PC-9 (cell line): ENCODE measurements at regions of chr17 and their contacts with region 1.

Region 1: DNA sequence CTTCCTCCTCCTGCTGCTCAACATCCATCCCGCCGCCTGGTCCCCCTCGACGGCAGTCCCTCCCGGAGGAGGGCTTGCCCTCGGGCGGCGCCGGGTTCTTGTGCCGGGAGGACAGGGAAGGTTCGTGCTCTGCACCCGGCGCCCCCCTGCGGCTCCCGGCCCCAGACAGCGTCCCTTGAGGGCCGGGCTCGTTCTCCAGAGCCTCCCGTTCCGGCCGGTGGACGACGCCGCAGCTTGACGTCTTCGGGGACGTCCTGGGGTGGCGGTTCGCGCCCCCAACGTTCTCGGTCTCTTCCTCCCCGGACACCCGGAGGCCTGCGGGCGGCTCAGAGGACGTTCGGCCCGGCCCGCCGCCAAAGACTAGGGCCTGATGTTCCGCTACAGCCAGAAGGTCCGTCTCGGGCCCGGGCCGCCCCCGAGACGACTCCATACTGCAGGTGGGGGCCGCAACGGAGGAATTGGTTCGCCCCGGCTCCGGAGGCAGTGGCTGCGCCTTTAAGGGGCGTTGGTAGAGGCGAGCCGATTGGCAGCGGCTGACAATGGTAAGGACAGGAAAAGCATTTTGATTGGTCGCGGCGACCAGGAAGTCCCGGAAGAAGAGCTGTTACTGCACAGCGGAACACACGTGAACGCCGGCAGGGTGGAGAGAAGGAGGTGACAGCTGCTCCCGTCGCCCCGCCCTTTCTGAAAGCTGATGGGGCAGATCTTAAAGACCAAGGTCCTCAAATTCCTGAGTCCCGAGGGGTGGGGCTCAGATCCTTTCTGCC is at the start of gene BORCS6:
- DNase-seq: peak; percentile 90 to 96
- H3K4me3 ChIP-seq: peak within 1 kb of the TSS; percentile 86
- H3K27ac ChIP-seq: no peak within 1 kb of the TSS
- H3K4me1 ChIP-seq: peaks cover 12% of the 10 kb centered on the region
- H3K27me3 ChIP-seq: no peaks in the 10 kb centered on the region
- CTCF ChIP-seq: no peak
- total RNA-seq, gene BORCS6: 6.4 and 8.0 TPM in 2 replicates

Region 2: DNA sequence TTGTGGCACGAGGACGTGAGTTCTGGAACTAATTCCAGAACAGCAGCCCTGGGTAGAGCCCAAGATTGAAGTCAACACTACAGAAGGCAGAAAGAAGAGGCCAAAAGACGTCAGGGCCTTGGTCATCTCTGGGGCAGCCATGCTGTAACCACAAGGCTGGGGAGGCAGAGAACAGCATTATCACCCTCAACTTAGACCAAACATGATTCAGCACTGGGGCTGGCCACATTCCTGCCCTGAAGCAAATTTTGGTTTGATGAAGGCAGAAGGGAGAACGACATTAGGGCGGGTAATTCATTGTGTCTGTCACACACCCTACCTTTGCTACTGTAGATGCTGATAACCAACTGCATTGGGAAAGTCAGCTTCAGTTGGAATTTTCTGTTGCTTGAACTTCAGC is 160.8 kb before region 1 on chr17:
- CTCF ChIA-PET with region 1: no interaction called
- POLR2A ChIA-PET with region 1: interaction called, 11 read pairs
- intact Hi-C with region 1: no loop called
- DNase-seq: peak; percentile 61 to 74
- H3K4me3 ChIP-seq: no peak overlapping the region
- H3K27ac ChIP-seq: no peak overlapping the region
- H3K4me1 ChIP-seq: peaks cover 9% of the 10 kb centered on the region
- H3K27me3 ChIP-seq: no peaks in the 10 kb centered on the region
- CTCF ChIP-seq: no peak

Region 3: DNA sequence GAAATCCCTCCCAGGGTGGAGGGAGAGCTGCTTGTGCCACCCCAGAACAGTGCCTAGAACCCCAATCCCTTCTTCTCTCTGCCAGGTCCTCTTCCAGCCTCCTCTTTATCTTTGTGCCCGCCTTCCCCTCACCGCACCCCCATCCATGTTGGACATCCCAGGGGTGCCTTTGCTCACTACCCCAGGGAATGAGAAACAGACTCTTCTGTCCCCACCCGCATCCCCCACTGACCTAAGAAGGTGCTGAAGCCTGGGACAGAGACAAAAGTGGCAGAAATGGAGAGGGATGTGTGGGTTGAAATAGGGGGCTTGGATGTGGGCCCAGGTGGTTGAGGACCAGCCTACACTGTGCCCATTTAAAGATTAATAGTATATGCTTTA is 134.1 kb before region 1 on chr17:
- CTCF ChIA-PET with region 1: no interaction called
- POLR2A ChIA-PET with region 1: no interaction called
- intact Hi-C with region 1: no loop called
- DNase-seq: no peak
- H3K4me3 ChIP-seq: no peak overlapping the region
- H3K27ac ChIP-seq: peak overlapping the region; percentile 40; the same call in 1 of the 2 replicates
- H3K4me1 ChIP-seq: peaks cover 28% of the 10 kb centered on the region
- H3K27me3 ChIP-seq: no peaks in the 10 kb centered on the region; the same call in none of the 2 replicates
- CTCF ChIP-seq: no peak

Region 4: GRCh38 chr17:8138672-8139371 is 51.1 kb before region 1 on chr17:
- CTCF ChIA-PET with region 1: interaction called, 3 read pairs
- POLR2A ChIA-PET with region 1: interaction called, 3 read pairs
- intact Hi-C with region 1: loop called (anchors 1 kb)
- DNase-seq: peak; percentile 92 to 99
- H3K4me3 ChIP-seq: peak overlapping the region; percentile 78
- H3K27ac ChIP-seq: peak overlapping the region; percentile 69
- H3K4me1 ChIP-seq: peaks cover 14% of the 10 kb centered on the region
- H3K27me3 ChIP-seq: no peaks in the 10 kb centered on the region
- CTCF ChIP-seq: peak; percentile 78

Region 5: DNA sequence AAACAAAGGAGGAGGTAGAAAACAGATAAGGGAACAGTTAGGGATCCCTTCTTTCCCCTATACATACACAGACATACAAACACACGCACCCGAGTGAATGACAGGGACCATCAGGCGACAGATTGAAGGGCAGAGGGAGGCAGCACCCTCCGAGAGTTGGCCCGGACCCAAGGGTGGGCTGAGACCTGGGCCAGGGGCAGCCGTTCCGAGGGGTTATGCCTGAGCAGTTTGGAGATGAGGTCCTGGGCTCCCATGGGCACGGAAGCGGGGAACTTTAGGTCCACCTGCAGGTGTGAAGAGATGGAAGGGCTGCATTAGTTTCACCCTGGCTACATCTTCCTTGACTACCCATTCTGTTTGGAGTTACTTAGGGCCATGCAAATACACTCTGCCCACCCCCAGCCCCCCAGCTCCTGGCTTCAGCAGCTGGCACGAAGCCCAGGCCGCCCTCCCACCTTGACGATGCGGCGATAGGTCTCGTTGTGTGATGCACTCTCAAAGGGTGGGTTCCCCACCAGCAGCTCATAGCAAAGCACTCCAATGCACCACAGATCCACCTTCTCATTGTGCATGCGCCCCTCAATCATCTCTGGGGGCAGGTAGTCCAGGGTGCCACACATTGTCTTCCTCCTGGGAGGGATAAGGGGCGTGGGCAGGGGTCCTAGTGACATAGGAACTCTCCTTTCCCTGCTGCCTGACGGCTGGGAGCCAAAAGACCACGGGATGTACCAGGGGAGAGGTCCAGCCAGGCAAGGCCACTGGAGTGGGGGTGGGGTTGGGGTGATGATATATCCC is 15.1 kb after region 1 on chr17:
- CTCF ChIA-PET with region 1: no interaction called
- POLR2A ChIA-PET with region 1: interaction called, 18 read pairs
- intact Hi-C with region 1: no loop called
- DNase-seq: no peak
- H3K4me3 ChIP-seq: no peak overlapping the region
- H3K27ac ChIP-seq: no peak overlapping the region
- H3K4me1 ChIP-seq: peaks cover 10% of the 10 kb centered on the region
- H3K27me3 ChIP-seq: no peaks in the 10 kb centered on the region
- CTCF ChIP-seq: no peak

Region 6: GRCh38 chr17:8243827-8244226 is 53.9 kb after region 1 on chr17:
- CTCF ChIA-PET with region 1: no interaction called
- POLR2A ChIA-PET with region 1: interaction called, 20 read pairs
- intact Hi-C with region 1: loop called (anchors 1 kb)
- DNase-seq: no peak
- H3K4me3 ChIP-seq: no peak overlapping the region
- H3K27ac ChIP-seq: no peak overlapping the region
- H3K4me1 ChIP-seq: no peaks in the 10 kb centered on the region
- H3K27me3 ChIP-seq: no peaks in the 10 kb centered on the region
- CTCF ChIP-seq: no peak

Region 7: DNA sequence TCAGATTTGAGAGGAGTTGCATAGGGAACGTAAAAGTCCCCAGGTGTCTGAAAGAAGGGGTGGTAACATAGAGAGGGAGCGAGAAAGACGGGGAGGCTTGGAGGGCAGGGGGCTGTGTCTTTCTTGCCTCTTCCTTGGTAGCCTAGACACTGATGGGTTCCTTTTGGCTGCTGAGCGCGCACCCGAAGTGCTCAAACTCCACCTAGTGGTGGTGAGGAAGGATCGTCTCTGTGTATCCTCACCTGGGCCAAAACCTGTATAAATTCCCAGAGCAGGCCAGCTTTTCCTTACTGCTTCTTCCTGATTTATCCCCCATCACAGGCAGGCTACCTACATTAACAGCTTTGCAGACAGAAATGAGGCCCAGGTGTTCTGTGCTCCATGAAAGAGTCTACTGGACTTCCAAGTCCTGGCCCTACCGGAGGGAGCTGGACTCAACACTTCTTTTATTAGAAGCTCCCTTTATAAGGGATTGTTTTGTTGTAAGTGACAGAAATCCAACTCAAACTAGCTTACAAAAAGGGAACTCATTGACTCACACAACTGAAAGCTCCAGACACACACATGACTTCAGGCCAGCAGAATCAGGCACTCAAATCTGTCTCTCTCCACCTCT is 110.8 kb after region 1 on chr17:
- CTCF ChIA-PET with region 1: interaction called, 6 read pairs
- POLR2A ChIA-PET with region 1: interaction called, 7 read pairs
- intact Hi-C with region 1: loop called (anchors 1 kb)
- DNase-seq: peak; percentile 42 to 58
- H3K4me3 ChIP-seq: no peak overlapping the region
- H3K27ac ChIP-seq: no peak overlapping the region
- H3K4me1 ChIP-seq: no peaks in the 10 kb centered on the region
- H3K27me3 ChIP-seq: no peaks in the 10 kb centered on the region
- CTCF ChIP-seq: peak; percentile 82